ENCODE measurements at regions of chr15 and their contacts with region 1.

Region 1: GRCh38 chr15:72127724-72128322 is 9.6 kb downstream of the SENP8 start:
- DNase-seq: no peak
- ATAC-seq: no peak
- H3K4me3 ChIP-seq: no peak overlapping the region
- H3K27ac ChIP-seq: no peak overlapping the region
- H3K4me1 ChIP-seq: no peaks in the 10 kb centered on the region
- H3K27me3 ChIP-seq: no peaks in the 10 kb centered on the region
- CTCF ChIP-seq: no peak
- POLR2A ChIP-seq: no peak
- RAD21 ChIP-seq: no peak

Region 2: GRCh38 chr15:72117486-72118399 is 10.1 kb before region 1 on chr15 and contains the start of gene MYO9A:
- CTCF ChIA-PET with region 1: interaction called, 4 read pairs
- POLR2A ChIA-PET with region 1: interaction called, 14 read pairs
- RAD21 ChIA-PET with region 1: no interaction called
- intact Hi-C with region 1: no loop called
- DNase-seq: peak; percentile 97
- ATAC-seq: peak; percentile 85
- H3K4me3 ChIP-seq: peak within 1 kb of the TSS; percentile 80 to 81
- H3K27ac ChIP-seq: peak within 1 kb of the TSS; percentile 85
- H3K4me1 ChIP-seq: peaks cover 4 to 17% of the 10 kb centered on the region in 2 experiments; a peak in 3 of 4 replicates
- H3K27me3 ChIP-seq: no peaks in the 10 kb centered on the region
- CTCF ChIP-seq: no peak
- POLR2A ChIP-seq: peak; percentile 32
- RAD21 ChIP-seq: no peak
- total RNA-seq, gene MYO9A: 23.0 TPM